ENCODE measurements at regions of chr11 and their contacts with region 1.

Region 1: GRCh38 chr11:20127671-20128527 is 32.4 kb downstream of the DBX1 start:
- H3K4me3 Mint-ChIP-seq: no peak overlapping the region
- H3K27ac Mint-ChIP-seq: no peak overlapping the region
- H3K4me1 Mint-ChIP-seq: peaks cover 11% of the 10 kb centered on the region
- H3K27me3 Mint-ChIP-seq: peaks cover 32% of the 10 kb centered on the region

Region 2: DNA sequence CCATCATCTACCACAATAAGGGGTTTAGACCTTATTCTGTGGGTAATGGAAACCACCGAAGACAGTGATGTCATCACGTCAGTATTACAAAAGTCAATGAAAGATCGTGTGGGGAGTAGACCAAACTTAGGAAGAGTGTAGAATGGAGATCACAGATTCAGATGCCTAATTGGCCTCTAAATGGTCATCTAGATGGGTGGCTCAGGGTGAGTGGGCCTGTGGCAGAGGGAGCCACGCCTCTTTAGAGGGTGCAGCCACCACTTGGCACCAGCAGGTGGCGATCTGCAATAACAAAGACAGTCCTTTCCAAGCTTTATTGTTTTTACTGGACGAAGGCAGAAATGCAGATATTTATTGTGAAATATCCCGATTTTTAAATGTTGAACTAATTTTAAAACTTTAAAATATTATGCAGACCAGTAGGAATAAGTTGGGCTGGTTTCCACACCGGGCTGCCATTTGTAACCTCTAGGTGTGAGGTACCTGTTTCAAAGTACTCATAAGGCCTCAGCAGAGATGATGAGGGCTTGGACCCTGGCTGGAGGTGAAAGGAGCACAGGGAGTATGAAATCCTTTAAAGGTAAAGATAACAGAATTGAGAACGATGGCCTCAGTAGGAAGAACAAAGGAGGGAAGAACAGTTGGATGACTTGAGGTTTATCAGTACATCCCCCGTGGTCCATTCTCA is 189.6 kb before region 1 on chr11:
- intact Hi-C with region 1: loop called (anchors 1 kb)
- H3K4me3 Mint-ChIP-seq: no peak overlapping the region
- H3K27ac Mint-ChIP-seq: no peak overlapping the region
- H3K4me1 Mint-ChIP-seq: no peaks in the 10 kb centered on the region
- H3K27me3 Mint-ChIP-seq: no peaks in the 10 kb centered on the region

Region 3: GRCh38 chr11:19951558-19952115 is 176.3 kb before region 1 on chr11:
- intact Hi-C with region 1: loop called (anchors 1 kb)
- H3K4me3 Mint-ChIP-seq: peak overlapping the region; percentile 70
- H3K27ac Mint-ChIP-seq: no peak overlapping the region
- H3K4me1 Mint-ChIP-seq: peaks cover 3% of the 10 kb centered on the region
- H3K27me3 Mint-ChIP-seq: peaks cover 5% of the 10 kb centered on the region

Region 4: GRCh38 chr11:20337526-20338154 is 209.7 kb after region 1 on chr11:
- intact Hi-C with region 1: loop called (anchors 5 kb)
- H3K4me3 Mint-ChIP-seq: no peak overlapping the region
- H3K27ac Mint-ChIP-seq: no peak overlapping the region
- H3K4me1 Mint-ChIP-seq: no peaks in the 10 kb centered on the region
- H3K27me3 Mint-ChIP-seq: peaks cover 34% of the 10 kb centered on the region

Region 5: DNA sequence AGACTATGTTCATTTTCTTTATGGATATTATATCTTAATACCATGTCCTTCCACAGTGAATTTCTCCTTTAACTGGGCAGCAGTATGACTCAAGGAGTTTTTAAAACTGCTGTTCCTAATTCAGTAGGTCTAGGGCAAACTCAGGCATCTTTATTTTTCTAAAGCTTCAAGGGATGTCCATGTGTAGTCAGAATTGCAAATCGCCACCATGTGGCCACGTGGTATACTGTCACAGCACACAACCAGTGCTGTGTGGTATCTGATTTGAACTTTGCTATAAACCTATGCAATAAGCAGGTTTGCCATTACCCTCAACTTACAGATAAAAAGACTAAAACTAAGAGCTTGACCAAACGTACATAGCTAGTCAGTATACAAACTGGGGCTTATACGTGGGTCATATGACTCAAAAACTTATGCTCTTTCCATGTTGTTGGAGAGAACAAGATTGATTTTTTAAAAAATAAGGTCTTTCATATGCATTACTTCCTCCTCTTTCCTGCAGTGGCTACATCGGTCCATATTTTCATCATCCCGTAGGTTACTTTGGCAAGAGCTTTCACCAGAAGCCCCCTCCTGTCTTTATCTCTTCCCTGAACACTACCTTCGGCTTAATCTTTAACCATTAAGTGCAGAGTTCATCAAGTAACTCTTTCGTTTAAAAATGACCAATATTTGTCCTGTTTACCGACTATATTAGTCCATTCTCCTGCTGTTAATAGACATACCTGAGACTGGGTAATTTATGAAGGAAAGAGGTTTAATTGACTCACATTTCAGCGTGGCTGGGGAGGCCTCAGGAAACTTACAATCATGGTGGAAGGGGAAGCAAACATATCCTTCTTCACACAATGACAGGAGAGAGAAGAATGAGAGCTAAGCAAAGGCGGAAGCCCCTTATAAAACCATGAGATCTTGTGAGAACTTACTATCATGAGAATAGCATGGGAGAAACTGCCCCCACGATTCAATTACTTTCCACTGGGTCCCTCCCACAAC is 227.6 kb after region 1 on chr11:
- intact Hi-C with region 1: loop called (anchors 1 kb)
- H3K4me3 Mint-ChIP-seq: no peak overlapping the region
- H3K27ac Mint-ChIP-seq: no peak overlapping the region
- H3K4me1 Mint-ChIP-seq: peaks cover 2% of the 10 kb centered on the region
- H3K27me3 Mint-ChIP-seq: peaks cover 30% of the 10 kb centered on the region

Measured in dendritic cell treated with granulocyte-macrophage colony-stimulating factor and Interleukin-4, amounts not matched to agents 40 ng/mL and 50 ng/mL, for 4 days (primary cell).